A673 (cell line): ENCODE measurements at regions of chr3 and their contacts with region 1.

Region 1: DNA sequence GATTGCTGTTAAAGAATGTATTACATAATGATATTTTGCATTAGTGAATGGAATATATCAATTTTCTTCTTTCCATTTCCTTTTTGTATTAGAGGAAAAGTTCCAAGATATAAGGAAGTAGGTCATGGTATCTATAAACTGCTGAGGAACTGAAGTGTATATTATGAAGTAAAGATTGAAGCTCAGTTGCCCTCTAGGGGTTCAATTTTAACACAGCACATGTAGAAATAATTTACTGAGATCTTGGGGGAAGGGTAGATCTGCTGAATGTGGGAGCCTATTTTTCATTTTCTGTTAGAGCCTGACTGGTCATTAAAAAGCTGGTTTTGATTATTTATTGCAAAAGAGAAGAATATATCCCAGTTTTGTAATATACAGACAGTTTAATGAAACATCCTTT is 45.2 kb downstream of the CMC1 start:
- DNase-seq: peak; percentile 58
- H3K4me3 ChIP-seq: no peak overlapping the region
- H3K27ac ChIP-seq: no peak overlapping the region
- H3K4me1 ChIP-seq: no peaks in the 10 kb centered on the region
- H3K27me3 ChIP-seq: no peaks in the 10 kb centered on the region
- CTCF ChIP-seq: peak; percentile 68

Region 2: DNA sequence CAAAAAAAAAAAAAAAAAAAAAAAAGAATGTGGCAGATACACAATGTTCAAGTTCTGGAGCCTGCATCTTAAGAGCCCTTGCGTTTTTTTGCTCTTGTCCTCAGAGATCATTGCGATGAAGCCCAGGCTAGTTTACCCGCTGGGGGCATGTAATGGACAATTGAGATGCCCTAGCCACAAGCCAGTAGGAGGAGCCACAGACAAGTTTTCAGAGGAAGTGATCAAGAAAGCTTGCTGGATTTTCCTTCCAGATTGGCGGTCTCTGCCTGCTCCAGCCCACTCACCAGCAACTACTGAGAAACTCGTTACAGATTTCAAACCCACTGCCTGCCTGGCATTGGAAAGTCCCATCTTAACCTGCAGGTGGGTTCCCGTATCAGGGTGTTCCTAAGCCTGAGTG is 372.4 kb before region 1 on chr3:
- CTCF ChIA-PET with region 1: no interaction called
- POLR2A ChIA-PET with region 1: no interaction called
- intact Hi-C with region 1: loop called (anchors 10 kb)
- DNase-seq: peak; percentile 34
- H3K4me3 ChIP-seq: no peak overlapping the region
- H3K27ac ChIP-seq: no peak overlapping the region
- H3K4me1 ChIP-seq: no peaks in the 10 kb centered on the region
- H3K27me3 ChIP-seq: no peaks in the 10 kb centered on the region
- CTCF ChIP-seq: peak; percentile 36; the same call in 1 of the 2 replicates